Cardiac septum (tissue), 1 donor: ENCODE measurements at regions of chr12 and their contacts with region 1.

Region 1: DNA sequence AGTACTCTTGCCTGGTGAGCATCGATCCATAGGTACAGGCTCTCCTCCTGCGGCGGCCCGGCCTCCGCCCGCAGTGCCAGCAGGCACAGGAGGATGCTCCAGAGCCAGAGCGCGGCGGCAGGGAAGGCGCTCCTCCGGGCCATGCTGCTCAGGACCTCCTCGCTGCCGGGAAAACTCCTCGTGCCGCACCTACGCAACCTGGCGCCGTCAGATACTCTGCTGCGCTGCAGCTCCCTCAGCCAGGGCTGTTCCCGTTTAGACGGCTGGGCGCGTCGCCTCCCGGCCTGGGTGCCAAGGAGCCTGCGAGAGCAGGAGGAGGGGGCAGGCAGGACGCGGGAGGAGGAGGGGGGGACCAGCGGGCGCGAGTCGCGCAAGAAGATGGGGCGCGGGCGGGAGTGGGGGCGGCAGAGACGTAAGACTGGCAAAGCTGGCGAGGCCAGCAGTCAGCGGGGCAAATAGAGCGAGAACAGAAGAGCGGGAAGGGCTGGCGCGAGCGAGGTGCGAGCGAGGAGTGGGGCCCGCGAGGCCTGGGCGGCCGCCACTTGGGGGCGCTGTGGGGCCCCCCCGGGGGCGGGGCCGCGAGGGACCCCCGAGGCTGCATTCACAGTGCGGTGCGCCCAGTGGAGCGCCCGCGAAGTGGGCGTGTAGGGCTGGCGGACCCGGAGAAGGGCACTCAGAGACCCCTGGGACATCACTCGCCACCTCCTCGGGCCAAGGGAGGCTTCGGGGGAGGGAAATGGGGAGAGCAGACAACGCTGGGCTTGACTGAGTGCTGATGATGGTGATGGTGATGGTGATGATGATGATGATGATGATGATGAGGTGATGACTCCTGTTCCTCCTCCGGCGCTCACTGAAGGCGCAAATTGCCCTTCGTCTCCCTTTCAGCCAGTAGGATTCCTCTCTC is at the start of gene WIF1:
- DNase-seq: no peak
- total RNA-seq, gene WIF1: 0.13 TPM

Region 2: GRCh38 chr12:64900540-64900939 is 220.8 kb before region 1 on chr12:
- intact Hi-C with region 1: loop called (anchors 5 kb)
- DNase-seq: no peak

Region 3: DNA sequence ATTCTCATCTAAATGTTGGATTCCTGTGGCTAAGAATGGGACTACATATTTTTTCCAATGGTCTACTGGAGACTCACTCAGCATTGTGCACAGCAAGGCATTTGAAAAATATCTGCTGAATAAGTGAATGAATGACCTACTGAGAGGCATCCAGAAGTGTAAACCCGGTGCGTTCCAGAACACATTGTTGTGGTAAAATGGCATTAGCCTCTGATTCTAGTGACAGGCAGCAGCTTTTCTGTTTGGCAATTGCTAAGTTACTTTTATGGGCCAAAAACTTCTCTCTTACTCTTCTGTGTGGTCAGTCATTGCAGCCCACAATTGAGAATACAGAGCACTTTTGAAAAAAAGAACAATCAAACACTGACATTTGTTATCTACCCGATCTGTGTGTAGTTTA is 36.7 kb before region 1 on chr12:
- intact Hi-C with region 1: no loop called
- DNase-seq: no peak

Region 4: GRCh38 chr12:65335021-65335714 is 213.9 kb after region 1 on chr12:
- intact Hi-C with region 1: no loop called
- DNase-seq: no peak